ENCODE measurements at regions of chr5 and their contacts with region 1.

Region 1: DNA sequence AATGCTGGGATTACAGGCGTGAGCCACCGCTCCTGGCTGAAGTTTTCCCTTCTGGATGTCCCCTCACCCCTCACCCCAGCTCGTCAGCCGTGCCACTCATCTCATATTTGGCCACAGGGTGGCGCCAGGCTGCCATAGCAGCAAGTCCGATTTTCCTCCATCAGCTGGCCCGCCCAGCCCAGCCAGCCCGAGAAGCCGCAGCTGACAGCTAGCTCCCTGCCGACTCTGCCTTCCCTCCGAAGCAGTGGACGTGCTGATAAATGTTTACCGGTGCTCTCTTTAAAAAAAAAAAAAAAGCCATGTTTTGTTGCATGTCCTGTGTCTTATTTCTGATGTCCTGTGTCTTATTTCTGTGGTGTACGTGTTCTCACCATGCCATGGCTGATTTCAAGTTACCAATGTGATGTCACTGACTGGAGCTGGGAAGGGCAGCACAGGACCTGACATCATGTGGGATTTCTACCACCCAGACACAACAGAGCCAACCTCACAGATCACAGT is 58.3 kb downstream of the PFDN1 start:
- DNase-seq: no peak
- ATAC-seq: peak; percentile 92
- H3K4me3 ChIP-seq: no peak overlapping the region
- H3K27ac ChIP-seq: no peak overlapping the region
- H3K4me1 ChIP-seq: peaks cover 4% of the 10 kb centered on the region; the same call in 1 of the 2 replicates
- H3K27me3 ChIP-seq: no peaks in the 10 kb centered on the region
- CTCF ChIP-seq: peak; percentile 70 to 90 (median 85); a peak in 5 of 6 replicates
- EP300 ChIP-seq: no peak
- POLR2A ChIP-seq: no peak
- RAD21 ChIP-seq: peak; percentile 84

Region 2: GRCh38 chr5:139968547-139969261 is 275.9 kb before region 1 on chr5:
- CTCF ChIA-PET with region 1: no interaction called
- POLR2A ChIA-PET with region 1: no interaction called
- RAD21 ChIA-PET with region 1: no interaction called
- SMC1A ChIA-PET with region 1: no interaction called
- in situ Hi-C with region 1: no loop called
- intact Hi-C with region 1: no loop called
- DNase-seq: peak; percentile 43
- ATAC-seq: peak; percentile 97
- H3K4me3 ChIP-seq: no peak overlapping the region
- H3K27ac ChIP-seq: no peak overlapping the region
- H3K4me1 ChIP-seq: peaks cover 10% of the 10 kb centered on the region
- H3K27me3 ChIP-seq: no peaks in the 10 kb centered on the region
- CTCF ChIP-seq: peak; percentile 100; a peak in 5 of 6 replicates
- EP300 ChIP-seq: no peak
- POLR2A ChIP-seq: no peak
- RAD21 ChIP-seq: peak; percentile 97

Region 3: GRCh38 chr5:140038373-140038957 is 206.1 kb before region 1 on chr5:
- CTCF ChIA-PET with region 1: no interaction called
- POLR2A ChIA-PET with region 1: no interaction called
- RAD21 ChIA-PET with region 1: no interaction called
- SMC1A ChIA-PET with region 1: no interaction called
- in situ Hi-C with region 1: no loop called
- intact Hi-C with region 1: no loop called
- DNase-seq: no peak
- ATAC-seq: peak; percentile 25
- H3K4me3 ChIP-seq: peak overlapping the region; percentile 89
- H3K27ac ChIP-seq: peak overlapping the region; percentile 43
- H3K4me1 ChIP-seq: peaks cover 2% of the 10 kb centered on the region
- H3K27me3 ChIP-seq: no peaks in the 10 kb centered on the region
- CTCF ChIP-seq: no peak
- EP300 ChIP-seq: 0 out of 4 replicates have a peak, but pooled peaks of 1 of the 2 experiments have one; percentile 29
- POLR2A ChIP-seq: no peak
- RAD21 ChIP-seq: no peak

Region 4: DNA sequence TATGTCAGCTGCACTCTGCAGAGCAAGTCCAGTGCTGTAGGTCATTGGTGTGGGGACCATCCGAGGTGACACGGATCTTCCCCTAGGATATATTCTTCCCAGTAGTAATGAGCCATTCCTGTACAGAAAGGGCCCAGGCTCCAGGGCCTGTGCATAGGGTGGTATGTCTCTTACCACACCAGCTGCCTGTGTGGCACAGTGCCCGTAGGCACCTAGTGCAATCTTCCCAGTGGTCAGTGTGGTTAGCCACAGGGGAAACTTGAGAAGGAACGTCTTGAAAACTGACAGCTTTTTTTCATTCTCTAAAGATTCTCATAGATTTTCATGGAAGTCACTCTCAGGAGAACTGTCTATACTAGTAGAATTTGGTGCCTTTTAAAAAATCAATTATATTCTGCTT is 29.7 kb before region 1 on chr5:
- CTCF ChIA-PET with region 1: interaction called, 11 read pairs
- POLR2A ChIA-PET with region 1: no interaction called
- RAD21 ChIA-PET with region 1: no interaction called
- SMC1A ChIA-PET with region 1: interaction called, 9 read pairs
- in situ Hi-C with region 1: no loop called
- intact Hi-C with region 1: no loop called
- DNase-seq: no peak
- ATAC-seq: peak; percentile 61
- H3K4me3 ChIP-seq: no peak overlapping the region
- H3K27ac ChIP-seq: no peak overlapping the region
- H3K4me1 ChIP-seq: peaks cover 8% of the 10 kb centered on the region
- H3K27me3 ChIP-seq: no peaks in the 10 kb centered on the region
- CTCF ChIP-seq: no peak
- EP300 ChIP-seq: no peak
- POLR2A ChIP-seq: no peak
- RAD21 ChIP-seq: no peak

Region 5: DNA sequence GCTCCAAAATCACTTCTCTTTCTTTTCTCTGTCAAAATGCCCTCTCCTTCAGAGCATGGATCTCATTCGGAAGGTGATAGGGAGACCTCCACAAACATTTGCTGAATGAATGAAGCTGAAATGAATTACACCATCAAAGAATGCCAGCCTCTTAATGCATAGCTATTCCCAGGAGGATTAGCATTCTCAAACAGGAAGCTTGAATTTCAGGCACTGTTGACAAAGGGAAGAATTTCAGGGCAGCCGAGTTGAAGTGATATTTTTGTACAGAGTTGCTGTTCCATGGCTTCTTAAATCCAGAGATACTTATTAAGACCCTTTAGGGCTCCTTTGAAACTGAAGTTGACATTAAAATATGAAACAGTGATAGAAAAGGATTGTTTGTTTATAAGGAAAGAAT is 83.0 kb after region 1 on chr5:
- CTCF ChIA-PET with region 1: interaction called, 7 read pairs
- POLR2A ChIA-PET with region 1: interaction called, 4 read pairs
- RAD21 ChIA-PET with region 1: interaction called, 12 read pairs
- SMC1A ChIA-PET with region 1: interaction called, 15 read pairs
- in situ Hi-C with region 1: no loop called
- intact Hi-C with region 1: no loop called
- DNase-seq: no peak
- ATAC-seq: no peak
- H3K4me3 ChIP-seq: no peak overlapping the region
- H3K27ac ChIP-seq: no peak overlapping the region
- H3K4me1 ChIP-seq: no peaks in the 10 kb centered on the region
- H3K27me3 ChIP-seq: no peaks in the 10 kb centered on the region
- CTCF ChIP-seq: no peak
- EP300 ChIP-seq: no peak
- POLR2A ChIP-seq: no peak
- RAD21 ChIP-seq: no peak

Region 6: GRCh38 chr5:140357726-140358093 is 113.1 kb after region 1 on chr5:
- CTCF ChIA-PET with region 1: interaction called, 774 read pairs
- POLR2A ChIA-PET with region 1: interaction called, 3 read pairs
- RAD21 ChIA-PET with region 1: interaction called, 98 read pairs
- SMC1A ChIA-PET with region 1: interaction called, 345 read pairs
- in situ Hi-C with region 1: loop called (anchors 5 kb)
- intact Hi-C with region 1: loop called (anchors 1 kb)
- DNase-seq: no peak
- ATAC-seq: peak; percentile 98
- H3K4me3 ChIP-seq: no peak overlapping the region
- H3K27ac ChIP-seq: no peak overlapping the region
- H3K4me1 ChIP-seq: peaks cover 11% of the 10 kb centered on the region
- H3K27me3 ChIP-seq: no peaks in the 10 kb centered on the region
- CTCF ChIP-seq: peak; percentile 92 to 97 (median 96)
- EP300 ChIP-seq: no peak
- POLR2A ChIP-seq: no peak
- RAD21 ChIP-seq: peak; percentile 85

Region 7: GRCh38 chr5:140718241-140718580 is 473.6 kb after region 1 on chr5:
- CTCF ChIA-PET with region 1: interaction called, 9 read pairs
- POLR2A ChIA-PET with region 1: interaction called, 3 read pairs
- RAD21 ChIA-PET with region 1: interaction called, 5 read pairs
- SMC1A ChIA-PET with region 1: no interaction called
- in situ Hi-C with region 1: loop called (anchors 5 kb)
- intact Hi-C with region 1: loop called (anchors 5 kb)
- DNase-seq: no peak
- ATAC-seq: peak; percentile 11; the same call in 2 of the 3 replicates
- H3K4me3 ChIP-seq: no peak overlapping the region
- H3K27ac ChIP-seq: no peak overlapping the region
- H3K4me1 ChIP-seq: no peaks in the 10 kb centered on the region
- H3K27me3 ChIP-seq: no peaks in the 10 kb centered on the region
- CTCF ChIP-seq: no peak
- EP300 ChIP-seq: no peak
- POLR2A ChIP-seq: no peak
- RAD21 ChIP-seq: no peak